CD8-positive, alpha-beta T cell (primary cell): ENCODE measurements at regions of chr12 and their contacts with region 1.

Region 1: DNA sequence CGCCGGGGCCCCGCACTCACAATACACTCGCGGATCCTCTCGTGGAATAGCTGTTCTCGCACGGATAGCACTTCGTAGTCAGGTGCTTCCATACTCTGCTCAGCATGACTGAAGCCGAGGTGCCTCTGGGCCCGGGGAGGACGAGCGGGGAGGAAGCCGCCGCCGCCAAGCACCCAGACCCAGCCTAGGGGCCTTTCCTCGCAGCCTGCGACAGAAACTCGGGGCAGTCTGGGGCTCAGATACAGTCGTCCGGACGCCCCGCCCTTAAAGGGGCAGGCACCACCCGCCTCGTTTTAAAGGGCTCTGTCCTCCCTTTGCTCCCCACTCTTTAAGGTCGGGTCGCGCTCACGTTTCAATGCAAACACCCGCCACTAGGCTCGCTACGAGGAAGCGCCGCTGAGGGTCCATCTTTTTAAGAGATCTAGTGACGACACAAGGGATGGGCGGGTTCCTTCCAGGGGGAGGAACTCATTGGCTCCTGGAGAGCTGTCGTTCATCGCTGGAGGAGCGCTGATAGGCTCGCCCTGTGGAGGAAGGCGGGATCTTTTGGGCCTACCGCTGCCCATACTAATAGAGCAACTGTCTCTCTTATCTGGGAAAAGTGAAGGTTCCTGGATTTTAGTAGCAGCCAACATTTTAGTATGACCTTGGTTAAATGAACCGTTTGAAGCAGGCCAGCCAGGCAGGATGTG is at the start of gene LMBR1L:
- DNase-seq: peak; percentile 93 to 99 (median 96)
- ATAC-seq: peak; percentile 90
- H3K4me3 ChIP-seq: peak within 1 kb of the TSS; percentile 82 to 92
- H3K4me3 Mint-ChIP-seq: peak within 1 kb of the TSS; percentile 98
- H3K27ac ChIP-seq: peak within 1 kb of the TSS; percentile 92 to 97
- H3K27ac Mint-ChIP-seq: peak within 1 kb of the TSS; percentile 98
- H3K4me1 ChIP-seq: peaks cover 18% of the 10 kb centered on the region
- H3K4me1 Mint-ChIP-seq: peaks cover 44% of the 10 kb centered on the region
- H3K27me3 ChIP-seq: no peaks in the 10 kb centered on the region
- H3K27me3 Mint-ChIP-seq: no peaks in the 10 kb centered on the region
- CTCF ChIP-seq: peak; percentile 53
- total RNA-seq, gene LMBR1L: 464 to 497 TPM

Region 2: GRCh38 chr12:49098035-49098451 is 12.6 kb before region 1 on chr12:
- CTCF ChIA-PET with region 1: interaction called, 44 read pairs
- POLR2A ChIA-PET with region 1: interaction called, 9 read pairs
- intact Hi-C with region 1: no loop called
- DNase-seq: peak; percentile 43 to 75 (median 65)
- ATAC-seq: peak; percentile 82
- H3K4me3 ChIP-seq: no peak overlapping the region
- H3K4me3 Mint-ChIP-seq: no peak overlapping the region
- H3K27ac ChIP-seq: no peak overlapping the region
- H3K27ac Mint-ChIP-seq: no peak overlapping the region
- H3K4me1 ChIP-seq: peaks cover 14% of the 10 kb centered on the region
- H3K4me1 Mint-ChIP-seq: peaks cover 15% of the 10 kb centered on the region
- H3K27me3 ChIP-seq: peaks cover 13 to 16% of the 10 kb centered on the region in 2 experiments
- H3K27me3 Mint-ChIP-seq: peaks cover 21% of the 10 kb centered on the region
- CTCF ChIP-seq: peak; percentile 83

Region 3: GRCh38 chr12:49244176-49244575 is 133.6 kb after region 1 on chr12:
- CTCF ChIA-PET with region 1: no interaction called
- POLR2A ChIA-PET with region 1: no interaction called
- intact Hi-C with region 1: no loop called
- DNase-seq: no peak
- ATAC-seq: no peak
- H3K4me3 ChIP-seq: no peak overlapping the region
- H3K4me3 Mint-ChIP-seq: no peak overlapping the region
- H3K27ac ChIP-seq: no peak overlapping the region
- H3K27ac Mint-ChIP-seq: no peak overlapping the region
- H3K4me1 ChIP-seq: no peaks in the 10 kb centered on the region
- H3K4me1 Mint-ChIP-seq: no peaks in the 10 kb centered on the region
- H3K27me3 ChIP-seq: no peaks in the 10 kb centered on the region
- H3K27me3 Mint-ChIP-seq: no peaks in the 10 kb centered on the region
- CTCF ChIP-seq: no peak